Activated CD8-positive, alpha-beta T cell treated with anti-CD3 and anti-CD28 coated beads, Interleukin-2, amount 10 ng/mL, durations not matched to agents 7 days and 5 days (primary cell): ENCODE measurements at regions of chr2 and their contacts with region 1.

Region 1: GRCh38 chr2:169131587-169132512 is 62.5 kb downstream of the DHRS9 start:
- DNase-seq: no peak
- ATAC-seq: peak; percentile 79
- H3K4me3 Mint-ChIP-seq: no peak overlapping the region
- H3K27ac Mint-ChIP-seq: no peak overlapping the region
- H3K4me1 Mint-ChIP-seq: peaks cover 11% of the 10 kb centered on the region
- H3K27me3 Mint-ChIP-seq: peaks cover 2% of the 10 kb centered on the region

Region 2: DNA sequence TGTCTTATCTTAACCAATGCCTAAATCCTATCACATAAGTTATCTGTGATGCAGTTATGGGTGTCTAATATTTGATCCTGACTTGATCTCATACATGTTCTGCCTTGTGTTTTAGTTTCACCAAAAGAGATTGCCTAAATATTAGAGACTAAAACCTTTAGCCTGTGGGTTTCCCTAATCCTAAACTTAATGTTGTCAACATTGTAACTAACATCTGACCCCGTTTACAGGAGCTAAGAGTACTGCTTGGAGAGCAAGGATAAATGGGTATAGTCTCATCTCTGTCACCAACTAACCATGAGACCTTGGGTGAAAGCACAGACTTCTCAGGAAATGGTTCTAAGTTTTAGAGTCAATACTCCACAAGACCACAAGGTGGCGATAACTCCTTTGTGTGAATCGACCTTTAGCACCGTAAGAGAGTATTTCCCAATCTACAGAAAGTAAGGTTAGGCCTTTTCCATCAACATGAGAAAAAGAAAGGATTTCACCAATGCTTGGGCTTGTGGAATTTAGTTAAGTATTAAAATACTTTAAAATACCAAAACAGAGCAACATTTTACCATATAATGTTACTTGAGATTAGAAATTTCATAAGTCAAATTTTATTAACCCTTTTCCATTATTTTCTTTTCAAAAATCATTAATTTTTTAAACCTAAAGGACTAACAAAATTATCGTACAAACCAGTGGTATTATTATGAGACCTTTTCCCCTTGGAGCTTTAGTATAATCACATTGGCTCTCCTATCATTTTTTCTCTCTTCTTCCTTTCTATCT is 170.2 kb before region 1 on chr2:
- CTCF ChIA-PET with region 1: interaction called, 54 read pairs
- POLR2A ChIA-PET with region 1: no interaction called
- DNase-seq: peak; percentile 69
- ATAC-seq: peak; percentile 73
- H3K4me3 Mint-ChIP-seq: no peak overlapping the region
- H3K27ac Mint-ChIP-seq: no peak overlapping the region
- H3K4me1 Mint-ChIP-seq: peaks cover 38% of the 10 kb centered on the region
- H3K27me3 Mint-ChIP-seq: no peaks in the 10 kb centered on the region

Region 3: DNA sequence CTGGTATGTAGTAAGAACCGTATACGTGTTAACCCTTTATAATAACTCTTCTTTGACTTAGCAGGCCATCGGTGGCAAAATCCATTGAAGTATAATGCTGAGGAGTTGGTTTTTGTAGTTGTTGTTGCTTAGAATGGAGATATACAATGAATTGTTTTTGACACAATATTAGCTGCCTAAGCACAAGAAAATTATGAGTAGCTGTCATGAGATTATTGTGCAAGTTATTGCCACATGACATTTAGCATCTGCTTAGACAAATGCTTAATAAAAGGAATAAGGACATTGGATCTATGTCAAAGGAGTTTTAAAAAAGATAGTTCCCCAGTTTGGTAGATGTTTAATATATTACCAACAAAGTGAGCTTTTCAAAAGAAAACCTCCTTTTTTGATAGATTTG is 160.6 kb before region 1 on chr2:
- CTCF ChIA-PET with region 1: interaction called, 12 read pairs
- POLR2A ChIA-PET with region 1: no interaction called
- DNase-seq: no peak
- ATAC-seq: no peak
- H3K4me3 Mint-ChIP-seq: no peak overlapping the region
- H3K27ac Mint-ChIP-seq: no peak overlapping the region
- H3K4me1 Mint-ChIP-seq: no peaks in the 10 kb centered on the region
- H3K27me3 Mint-ChIP-seq: no peaks in the 10 kb centered on the region

Region 4: GRCh38 chr2:169069341-169069740 is 62.5 kb before region 1 on chr2 and contains the start of gene DHRS9:
- CTCF ChIA-PET with region 1: no interaction called
- POLR2A ChIA-PET with region 1: no interaction called
- DNase-seq: no peak
- ATAC-seq: no peak
- H3K4me3 Mint-ChIP-seq: no peak within 1 kb of the TSS
- H3K27ac Mint-ChIP-seq: no peak within 1 kb of the TSS
- H3K4me1 Mint-ChIP-seq: peaks cover 8% of the 10 kb centered on the region
- H3K27me3 Mint-ChIP-seq: peaks cover 1% of the 10 kb centered on the region
- total RNA-seq, gene DHRS9: not detected

Region 5: GRCh38 chr2:169119126-169119770 is 12.6 kb before region 1 on chr2:
- CTCF ChIA-PET with region 1: interaction called, 30 read pairs
- POLR2A ChIA-PET with region 1: no interaction called
- DNase-seq: no peak
- ATAC-seq: no peak
- H3K4me3 Mint-ChIP-seq: no peak overlapping the region
- H3K27ac Mint-ChIP-seq: no peak overlapping the region
- H3K4me1 Mint-ChIP-seq: no peaks in the 10 kb centered on the region
- H3K27me3 Mint-ChIP-seq: peaks cover 33% of the 10 kb centered on the region

Region 6: GRCh38 chr2:169348321-169349024 is 216.6 kb after region 1 on chr2:
- CTCF ChIA-PET with region 1: no interaction called
- POLR2A ChIA-PET with region 1: no interaction called
- DNase-seq: no peak
- ATAC-seq: no peak
- H3K4me3 Mint-ChIP-seq: no peak overlapping the region
- H3K27ac Mint-ChIP-seq: no peak overlapping the region
- H3K4me1 Mint-ChIP-seq: no peaks in the 10 kb centered on the region
- H3K27me3 Mint-ChIP-seq: peaks cover 12% of the 10 kb centered on the region